ENCODE measurements at regions of chr6 and their contacts with region 1.

Region 1: DNA sequence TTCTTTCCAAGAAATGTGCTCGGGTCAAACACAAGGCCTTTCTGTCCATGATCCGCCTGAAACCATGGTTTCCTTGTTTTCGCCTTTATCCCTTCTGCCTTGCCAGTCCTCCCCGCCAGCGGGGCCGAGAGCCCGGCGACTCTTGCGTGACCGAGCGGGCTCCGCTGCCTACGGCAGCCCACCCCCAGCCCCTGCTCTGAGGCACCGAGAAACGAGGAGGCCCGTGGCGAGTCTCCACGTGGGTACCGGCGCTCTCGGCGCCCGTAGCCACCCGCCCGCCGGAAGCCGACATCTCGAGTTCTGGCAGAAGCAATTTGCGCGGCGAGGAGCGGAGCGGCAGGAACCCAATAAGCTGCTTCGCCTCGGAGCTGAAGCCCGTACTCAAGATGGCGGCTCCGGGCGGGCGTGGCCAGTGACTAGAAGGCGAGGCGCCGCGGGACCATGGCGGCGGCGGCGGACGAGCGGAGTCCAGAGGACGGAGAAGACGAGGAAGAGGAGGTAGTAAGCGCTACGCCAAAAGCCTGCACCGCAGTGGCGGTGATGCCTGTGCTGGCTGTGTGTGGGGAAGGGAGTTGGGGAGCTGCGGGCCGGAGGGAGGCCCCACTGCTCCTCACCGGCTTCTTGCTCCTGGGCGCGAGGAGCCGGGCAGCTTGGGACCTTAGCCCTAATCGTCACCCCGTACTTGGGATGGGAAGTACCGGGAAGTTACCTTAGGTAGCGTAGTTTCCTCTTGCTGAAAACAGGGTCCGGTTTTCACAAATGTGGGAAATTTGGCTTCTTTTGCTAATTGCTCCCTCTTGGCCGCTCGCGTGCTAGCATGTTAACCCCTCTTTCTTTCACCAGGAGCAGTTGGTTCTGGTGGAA is at the start of gene GTF3C6:
- DNase-seq: peak; percentile 92

Region 2: DNA sequence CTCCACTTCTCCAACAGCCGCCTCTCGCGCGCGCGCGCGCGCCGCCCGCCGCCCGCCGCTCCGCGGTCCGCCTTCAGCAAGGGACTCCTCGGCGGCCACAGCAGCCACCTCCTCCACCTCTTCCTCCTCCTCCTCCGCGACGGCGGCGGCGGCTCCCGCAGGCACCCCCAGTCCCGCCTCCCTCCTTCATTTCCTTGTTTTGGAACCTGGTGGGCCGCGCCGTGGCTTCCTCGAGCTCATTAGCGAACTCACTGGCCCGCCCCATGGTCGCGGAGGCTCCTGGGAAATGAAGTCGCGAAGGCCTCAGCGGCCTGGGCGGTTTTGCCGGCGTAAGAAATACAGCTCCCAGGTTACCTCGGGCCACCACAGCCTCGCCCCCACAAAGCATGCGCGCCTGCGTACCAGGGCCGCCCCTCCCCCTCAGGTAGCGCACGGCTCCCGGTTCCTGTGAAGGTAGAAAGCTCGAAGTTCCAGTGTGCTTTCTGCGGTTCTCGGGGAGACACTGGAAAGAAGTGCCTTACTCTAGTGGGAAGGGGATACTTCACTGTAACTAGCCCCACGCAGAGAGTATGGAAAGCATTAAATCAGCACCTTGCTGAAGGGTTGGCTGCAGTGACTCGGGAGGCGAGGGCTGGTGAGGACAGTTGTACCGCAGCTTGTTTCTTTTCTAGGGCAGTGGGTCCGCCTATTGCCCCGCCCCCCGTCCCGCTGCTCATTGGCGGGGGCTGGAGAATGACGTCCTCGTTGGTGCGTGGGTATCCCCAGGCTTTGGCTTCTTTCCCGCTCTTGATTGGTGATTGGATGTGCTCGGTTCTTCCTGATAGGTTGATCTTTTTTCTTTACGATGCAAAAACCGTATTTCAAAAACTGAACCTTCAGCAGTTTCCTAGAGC is 143.1 kb before region 1 on chr6 and contains the start of gene CDK19:
- CTCF ChIA-PET with region 1: interaction called, 5 read pairs
- POLR2A ChIA-PET with region 1: interaction called, 11 read pairs
- DNase-seq: peak; percentile 96

Region 3: DNA sequence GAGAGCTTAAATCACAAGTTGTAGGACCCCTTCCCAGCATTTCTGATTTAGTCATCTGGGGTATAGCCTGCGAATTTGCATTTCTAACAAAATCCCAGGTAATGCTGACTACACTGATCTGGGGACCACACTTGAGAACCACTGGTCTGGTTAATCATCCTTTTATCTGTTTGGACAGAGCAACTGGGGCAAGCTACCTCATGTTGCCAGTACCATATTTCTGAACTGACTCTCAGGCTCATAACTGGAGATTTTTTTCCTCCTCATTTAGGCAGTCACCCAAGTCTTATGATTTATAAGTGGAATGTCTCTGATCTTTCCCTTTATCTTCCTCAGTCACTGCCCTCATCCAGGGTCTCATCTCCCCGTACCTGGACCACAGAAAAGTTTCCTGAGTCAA is 12.1 kb before region 1 on chr6:
- CTCF ChIA-PET with region 1: no interaction called
- POLR2A ChIA-PET with region 1: interaction called, 12 read pairs
- DNase-seq: no peak

Region 4: GRCh38 chr6:110971468-110971867 is 12.9 kb after region 1 on chr6:
- CTCF ChIA-PET with region 1: no interaction called
- POLR2A ChIA-PET with region 1: interaction called, 25 read pairs
- DNase-seq: no peak

Region 5: GRCh38 chr6:110981202-110981600 is 22.6 kb after region 1 on chr6:
- CTCF ChIA-PET with region 1: interaction called, 3 read pairs
- POLR2A ChIA-PET with region 1: interaction called, 27 read pairs
- DNase-seq: no peak

Region 6: DNA sequence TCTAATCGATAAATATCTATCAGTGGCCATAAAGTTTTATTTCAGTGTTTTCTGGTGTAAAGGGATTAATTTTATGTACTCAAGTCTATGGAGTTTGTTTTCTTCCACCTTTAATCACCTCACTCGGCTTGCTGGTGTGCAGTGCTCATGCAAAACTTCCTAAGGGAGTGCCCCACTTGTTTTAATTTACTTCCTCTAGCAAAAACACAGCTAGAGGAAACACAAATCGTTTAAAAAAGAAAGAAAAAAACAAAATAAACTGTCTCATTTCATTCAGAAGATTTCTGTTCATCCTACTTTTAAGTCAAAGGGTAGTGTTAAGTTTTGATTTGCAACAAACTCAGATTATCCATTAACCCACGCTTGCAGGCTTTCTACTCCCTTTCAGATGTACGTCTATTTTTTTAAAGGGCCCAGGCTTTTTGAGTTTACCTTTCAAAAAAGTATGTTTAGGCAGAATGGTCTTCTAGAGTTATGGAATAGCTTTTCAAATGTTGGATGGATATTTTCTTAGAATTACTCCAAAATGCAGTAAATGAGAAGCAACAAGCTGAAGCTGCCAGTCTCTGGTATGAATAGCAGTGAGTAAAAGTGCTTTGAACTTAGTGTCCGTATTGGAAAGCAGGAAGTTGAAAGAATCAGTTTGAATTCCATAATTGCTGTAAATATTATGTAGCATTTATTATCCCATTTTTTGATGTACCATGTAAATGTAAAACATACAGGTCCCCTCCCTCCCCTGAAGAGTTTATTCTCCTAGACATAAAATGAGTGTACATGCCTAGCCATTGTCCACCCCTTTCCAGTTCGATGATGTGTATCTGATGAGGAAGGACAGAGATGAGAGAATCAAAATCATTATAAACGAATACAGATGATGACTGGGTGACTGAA is 242.0 kb after region 1 on chr6:
- CTCF ChIA-PET with region 1: no interaction called
- POLR2A ChIA-PET with region 1: no interaction called
- DNase-seq: no peak

Measured in HEK293T (cell line).